ENCODE measurements at regions of chr7 and their contacts with region 1.

Region 1: DNA sequence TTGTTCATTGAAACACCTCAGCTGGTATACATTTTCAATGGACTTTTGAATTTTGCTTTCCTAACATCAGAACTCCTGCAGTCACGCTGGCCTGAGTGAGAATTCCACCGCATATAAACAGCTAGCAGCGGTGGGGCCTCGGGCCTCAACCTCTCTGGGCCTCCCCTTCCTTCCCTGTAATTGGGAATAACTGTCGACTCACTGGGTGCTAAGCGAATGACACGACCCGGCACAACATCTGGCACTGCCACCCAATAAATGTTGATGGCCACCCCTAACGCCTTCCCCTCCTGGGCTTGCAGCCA is 672 bp downstream of the RCC1L start:
- DNase-seq: no peak
- H3K4me3 Mint-ChIP-seq: peak overlapping the region; percentile 92
- H3K27ac Mint-ChIP-seq: peak overlapping the region; percentile 92
- H3K4me1 Mint-ChIP-seq: peaks cover 16% of the 10 kb centered on the region
- H3K27me3 Mint-ChIP-seq: no peaks in the 10 kb centered on the region

Region 2: GRCh38 chr7:75649462-75649861 is 576.5 kb after region 1 on chr7:
- CTCF ChIA-PET with region 1: no interaction called
- POLR2A ChIA-PET with region 1: no interaction called
- intact Hi-C with region 1: loop called (anchors 5 kb)
- DNase-seq: no peak
- H3K4me3 Mint-ChIP-seq: no peak overlapping the region
- H3K27ac Mint-ChIP-seq: no peak overlapping the region
- H3K4me1 Mint-ChIP-seq: no peaks in the 10 kb centered on the region
- H3K27me3 Mint-ChIP-seq: no peaks in the 10 kb centered on the region

Region 3: GRCh38 chr7:75878769-75879611 is 806.1 kb after region 1 on chr7 and contains the start of gene RHBDD2:
- CTCF ChIA-PET with region 1: no interaction called
- POLR2A ChIA-PET with region 1: no interaction called
- intact Hi-C with region 1: no loop called
- DNase-seq: peak; percentile 98
- H3K4me3 Mint-ChIP-seq: peak within 1 kb of the TSS; percentile 96
- H3K27ac Mint-ChIP-seq: peak within 1 kb of the TSS; percentile 90
- H3K4me1 Mint-ChIP-seq: peaks cover 29% of the 10 kb centered on the region
- H3K27me3 Mint-ChIP-seq: no peaks in the 10 kb centered on the region
- total RNA-seq, gene RHBDD2: 30.1 to 31.9 TPM